ENCODE measurements at regions of chr12 and their contacts with region 1.

Region 1: DNA sequence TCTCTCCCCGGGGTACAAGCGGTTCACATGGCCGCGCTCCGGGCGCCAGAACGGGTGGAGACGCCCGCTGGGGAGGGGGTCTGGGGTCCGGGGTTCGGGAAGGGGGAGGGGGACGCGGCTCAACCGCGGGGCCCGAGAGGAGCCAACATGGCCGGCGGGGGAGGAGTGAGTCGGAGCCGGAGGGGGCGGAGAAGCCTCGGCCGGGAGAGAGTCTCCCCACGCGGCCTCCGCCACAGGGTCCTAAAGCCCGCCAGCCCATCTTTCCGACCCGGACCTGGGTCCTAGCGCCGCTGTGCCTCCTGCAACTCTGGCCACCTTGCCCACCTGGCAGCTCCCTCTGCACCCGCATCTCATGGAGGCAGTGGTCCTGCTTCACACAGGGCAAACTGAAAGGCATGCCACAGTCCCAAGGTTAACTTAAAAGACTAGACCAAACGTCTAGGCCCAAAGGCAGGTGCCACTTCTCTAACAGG is at the start of gene BAZ2A:
- DNase-seq: peak; percentile 90 to 92
- ATAC-seq: peak; percentile 88 to 92 (median 89)
- H3K4me3 ChIP-seq: peak within 1 kb of the TSS; percentile 65 to 100 (median 99)
- H3K27ac ChIP-seq: peak within 1 kb of the TSS; percentile 81 to 100 (median 96)
- H3K4me1 ChIP-seq: peaks cover 29 to 74% (median 72%) of the 10 kb centered on the region in 9 donors
- H3K27me3 ChIP-seq: no peaks in the 10 kb centered on the region
- CTCF ChIP-seq: no peak
- total RNA-seq, gene BAZ2A: 28.7 to 58.7 (median 42.6) TPM

Region 2: GRCh38 chr12:56578983-56579546 is 51.1 kb before region 1 on chr12:
- intact Hi-C with region 1: loop called in 2 of 10 experiments (anchors 5 to 10 kb)
- DNase-seq: no peak
- ATAC-seq: no peak
- H3K4me3 ChIP-seq: no peak overlapping the region
- H3K27ac ChIP-seq: no peak overlapping the region
- H3K4me1 ChIP-seq: peaks cover 0 to 7% (median 0%) of the 10 kb centered on the region in 9 donors
- H3K27me3 ChIP-seq: no peaks in the 10 kb centered on the region
- CTCF ChIP-seq: no peak

Region 3: DNA sequence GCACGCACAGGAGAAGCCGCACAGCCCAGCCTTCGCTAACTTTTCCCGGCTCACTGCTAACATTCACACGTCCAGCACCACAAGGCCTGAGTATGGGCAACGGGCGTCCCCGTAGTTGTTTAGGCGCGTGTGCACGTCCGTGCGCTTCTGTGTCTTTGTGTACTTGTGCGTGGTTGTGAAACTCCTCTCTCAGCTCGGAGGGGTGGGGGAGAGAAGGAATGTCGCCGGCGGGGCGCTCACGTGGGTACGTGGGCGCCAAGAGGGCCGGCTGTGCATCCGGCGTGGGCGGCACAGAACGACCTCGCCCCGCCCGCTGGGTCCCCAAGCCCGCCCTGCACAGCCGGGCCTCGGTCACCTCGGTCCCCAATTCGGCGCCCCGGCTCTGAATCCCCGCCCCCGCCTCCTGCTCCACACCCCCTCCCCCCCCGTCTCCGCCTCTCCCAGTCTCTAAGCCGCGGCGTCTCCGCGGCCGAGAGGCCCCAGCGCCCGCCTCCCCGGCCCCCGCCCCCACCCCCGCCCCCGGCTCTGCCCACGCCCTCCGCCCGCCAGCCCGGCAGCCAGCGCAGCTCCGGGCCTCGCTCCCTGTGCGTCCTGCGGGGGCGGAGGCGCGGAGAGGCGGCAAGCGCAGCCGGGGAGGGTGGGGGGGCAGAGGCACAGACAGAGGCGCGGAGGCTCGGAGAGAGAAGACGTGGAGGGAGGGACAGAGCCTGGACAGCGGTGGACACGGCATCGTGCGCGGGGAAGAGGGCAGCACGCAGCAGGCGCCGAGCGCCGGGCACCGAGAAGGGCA is 458.5 kb after region 1 on chr12 and contains the start of gene NAB2:
- intact Hi-C with region 1: loop called in 1 of 10 experiments (anchors 5 kb)
- DNase-seq: peak; percentile 97
- ATAC-seq: peak; percentile 76 to 89 (median 80)
- H3K4me3 ChIP-seq: peak within 1 kb of the TSS; percentile 65 to 99 (median 88)
- H3K27ac ChIP-seq: peak within 1 kb of the TSS; percentile 91 to 100 (median 99)
- H3K4me1 ChIP-seq: peaks cover 19 to 70% (median 53%) of the 10 kb centered on the region in 9 donors
- H3K27me3 ChIP-seq: no peaks in the 10 kb centered on the region
- CTCF ChIP-seq: no peak
- total RNA-seq, gene NAB2: 9.5 to 16.2 (median 12.0) TPM

Measured in heart right ventricle (tissue), 16 donors.